ENCODE measurements at regions of chr2 and their contacts with region 1.

Region 1: GRCh38 chr2:181742922-181743722 is 62.8 kb upstream of the NEUROD1 start:
- DNase-seq: no peak
- H3K4me3 ChIP-seq: no peak overlapping the region
- H3K27ac ChIP-seq: no peak overlapping the region
- H3K4me1 ChIP-seq: no peaks in the 10 kb centered on the region
- H3K27me3 ChIP-seq: no peaks in the 10 kb centered on the region
- CTCF ChIP-seq: peak; percentile 17 to 70 (median 59)
- POLR2A ChIP-seq: no peak

Region 2: DNA sequence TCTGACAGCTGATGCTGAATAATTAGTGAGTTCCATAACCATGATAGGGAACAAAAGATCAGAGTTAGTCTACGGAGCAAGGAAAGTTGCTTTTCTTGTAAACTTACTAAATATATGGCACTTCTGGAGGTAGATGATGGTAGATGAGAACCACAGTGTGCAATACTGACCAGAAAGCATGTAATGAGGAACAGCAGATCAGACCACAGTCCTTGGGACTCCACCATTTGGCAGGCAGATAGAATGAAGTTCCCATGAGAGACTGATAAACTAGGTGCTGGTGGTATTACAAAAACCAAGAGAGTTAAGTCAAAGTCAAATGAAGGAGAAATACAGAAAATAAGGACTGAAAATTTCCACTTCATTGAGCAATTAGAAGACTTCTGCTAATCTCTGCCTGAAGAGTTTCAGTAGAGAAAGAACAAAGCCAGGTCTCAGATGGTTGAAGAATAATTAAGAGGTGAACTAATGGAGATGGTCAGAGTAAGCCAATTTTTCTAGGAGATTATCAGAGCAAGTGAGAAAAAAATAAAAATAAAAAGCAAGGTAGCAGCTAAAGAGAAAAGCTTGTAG is 96.6 kb before region 1 on chr2:
- intact Hi-C with region 1: no loop called
- DNase-seq: no peak
- H3K4me3 ChIP-seq: no peak overlapping the region
- H3K27ac ChIP-seq: no peak overlapping the region
- H3K4me1 ChIP-seq: no peaks in the 10 kb centered on the region
- H3K27me3 ChIP-seq: no peaks in the 10 kb centered on the region
- CTCF ChIP-seq: no peak
- POLR2A ChIP-seq: no peak

Region 3: GRCh38 chr2:182077451-182078142 is 334.5 kb after region 1 on chr2:
- intact Hi-C with region 1: loop called (anchors 10 kb)
- DNase-seq: no peak
- H3K4me3 ChIP-seq: no peak overlapping the region
- H3K27ac ChIP-seq: no peak overlapping the region
- H3K4me1 ChIP-seq: no peaks in the 10 kb centered on the region
- H3K27me3 ChIP-seq: no peaks in the 10 kb centered on the region
- CTCF ChIP-seq: peak in 2 of 3 experiments; percentile 24 to 67
- POLR2A ChIP-seq: no peak

Measured in vagina (tissue), 2 donors.